PC-9 (cell line): ENCODE measurements at regions of chr3 and their contacts with region 1.

Region 1: GRCh38 chr3:48151058-48151806 is 37.0 kb downstream of the CDC25A start:
- DNase-seq: peak; percentile 52 to 83
- H3K4me3 ChIP-seq: no peak overlapping the region
- H3K27ac ChIP-seq: no peak overlapping the region
- H3K4me1 ChIP-seq: peaks cover 18% of the 10 kb centered on the region
- H3K27me3 ChIP-seq: no peaks in the 10 kb centered on the region
- CTCF ChIP-seq: peak; percentile 83

Region 2: DNA sequence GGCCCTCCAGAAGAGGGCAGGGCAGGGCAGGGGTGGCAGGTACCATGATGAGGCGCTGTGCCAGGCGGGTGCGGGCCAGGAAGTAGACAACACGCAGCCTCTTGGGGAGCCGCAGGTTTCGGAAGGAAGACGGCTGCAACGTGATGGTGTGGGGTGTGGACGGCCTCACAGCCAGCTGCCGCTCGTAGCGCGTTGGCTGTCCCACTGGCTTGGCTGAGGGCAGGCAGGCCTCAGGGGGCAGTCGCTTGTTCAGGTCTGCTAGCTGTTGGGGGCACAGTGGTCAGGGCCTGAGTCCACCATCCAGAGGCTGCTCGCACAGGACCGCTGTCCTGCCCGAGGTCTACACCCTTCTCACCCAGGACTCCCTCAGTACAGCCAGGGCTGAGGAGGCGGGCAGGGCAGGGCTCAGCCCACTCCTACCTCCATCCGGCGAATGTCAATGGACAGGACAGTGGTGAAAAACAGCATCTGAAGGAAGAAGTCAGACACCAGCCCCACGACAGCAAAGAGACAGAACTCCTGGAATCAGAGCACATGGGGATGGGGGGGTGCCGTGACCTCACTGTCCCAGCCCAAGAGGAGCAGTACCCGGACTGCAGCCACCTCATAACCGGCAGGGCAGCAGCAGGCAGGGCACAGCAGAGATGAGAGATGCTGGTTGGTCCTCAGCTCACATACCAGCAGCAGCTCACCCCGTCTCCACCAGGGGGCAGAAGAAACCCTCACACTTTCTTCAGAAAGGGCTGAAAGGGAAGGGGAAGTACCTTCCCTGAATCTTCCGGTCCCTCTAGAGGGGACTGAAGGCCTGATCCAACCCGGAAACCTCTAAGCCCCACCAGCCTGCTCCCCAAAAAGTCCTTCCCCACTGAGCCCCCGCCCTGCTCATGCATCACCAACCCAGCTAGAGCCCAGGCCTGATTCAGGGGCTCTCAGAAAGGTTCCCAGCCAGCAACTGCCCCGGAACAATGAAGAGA is 730.4 kb before region 1 on chr3:
- CTCF ChIA-PET with region 1: no interaction called
- POLR2A ChIA-PET with region 1: no interaction called
- intact Hi-C with region 1: loop called (anchors 10 kb)
- DNase-seq: peak; percentile 74 to 84
- H3K4me3 ChIP-seq: no peak overlapping the region
- H3K27ac ChIP-seq: no peak overlapping the region
- H3K4me1 ChIP-seq: no peaks in the 10 kb centered on the region
- H3K27me3 ChIP-seq: no peaks in the 10 kb centered on the region
- CTCF ChIP-seq: peak; percentile 88

Region 3: DNA sequence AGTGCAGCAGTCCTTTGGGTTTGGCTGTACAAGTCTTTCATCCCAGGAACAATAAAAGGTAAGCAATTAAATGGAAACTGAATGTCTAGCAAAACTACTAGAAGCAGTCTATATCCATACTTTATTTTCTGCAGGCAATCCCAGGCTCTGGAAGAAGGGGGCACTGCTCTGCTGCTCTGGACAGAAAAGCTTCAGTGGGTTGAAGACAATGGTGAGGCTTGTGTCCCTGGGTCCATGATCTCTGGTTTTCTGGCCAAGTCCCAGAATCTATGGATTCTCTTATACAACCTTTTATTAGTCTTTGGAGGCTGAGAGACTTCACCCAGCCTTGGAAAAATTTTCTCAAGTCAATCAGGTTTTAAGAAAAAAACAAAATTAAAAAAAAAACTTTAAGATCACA is 711.1 kb before region 1 on chr3:
- CTCF ChIA-PET with region 1: no interaction called
- POLR2A ChIA-PET with region 1: no interaction called
- intact Hi-C with region 1: no loop called
- DNase-seq: no peak
- H3K4me3 ChIP-seq: no peak overlapping the region
- H3K27ac ChIP-seq: no peak overlapping the region
- H3K4me1 ChIP-seq: no peaks in the 10 kb centered on the region
- H3K27me3 ChIP-seq: no peaks in the 10 kb centered on the region
- CTCF ChIP-seq: no peak

Region 4: DNA sequence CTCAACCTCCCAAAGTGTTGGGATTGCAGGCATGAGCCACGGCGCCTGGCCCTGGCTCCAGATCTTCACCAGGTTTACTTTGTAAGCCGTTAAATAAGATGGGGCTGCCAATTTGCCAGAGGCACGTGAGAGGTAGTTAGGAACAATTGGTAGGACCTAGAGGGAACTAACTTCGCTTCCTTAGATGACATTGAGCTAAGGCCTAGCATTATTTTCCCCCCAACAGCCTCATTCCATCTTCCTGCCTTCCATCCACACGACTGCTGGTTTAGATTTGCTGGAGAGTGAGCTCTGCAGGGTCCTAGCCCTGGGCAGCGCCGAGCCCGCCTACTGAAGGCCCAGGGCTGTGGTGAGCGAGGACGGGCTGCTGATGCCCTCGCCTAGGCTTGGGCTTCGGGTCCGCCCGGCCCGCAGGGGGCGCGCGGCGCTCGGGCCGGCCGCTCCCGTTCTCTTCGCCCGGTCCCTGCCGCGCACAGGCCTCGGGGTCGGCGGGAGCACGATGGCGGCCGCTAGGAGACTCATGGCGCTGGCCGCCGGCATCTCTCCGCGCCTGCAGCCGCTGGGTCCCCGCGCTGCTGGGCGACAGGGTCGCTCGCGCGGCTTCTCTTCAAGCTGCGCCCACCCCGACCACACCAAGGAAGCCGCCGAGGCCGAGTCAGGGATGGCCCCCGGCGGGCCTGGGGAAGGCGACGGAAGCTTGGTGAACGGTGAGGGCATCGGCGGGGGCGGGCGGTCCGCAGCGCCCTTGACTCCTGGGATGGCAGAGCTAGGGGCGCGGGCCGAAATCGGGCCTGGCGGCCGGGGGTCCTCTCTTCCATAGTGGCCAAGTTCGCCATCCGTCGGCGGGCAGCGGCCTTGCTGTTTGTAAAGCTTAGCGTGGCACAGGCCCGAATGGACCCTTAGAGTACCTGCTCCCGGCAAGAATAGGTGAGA is 326.4 kb before region 1 on chr3:
- CTCF ChIA-PET with region 1: interaction called, 11 read pairs
- POLR2A ChIA-PET with region 1: no interaction called
- intact Hi-C with region 1: no loop called
- DNase-seq: peak; percentile 57 to 82
- H3K4me3 ChIP-seq: peak overlapping the region; percentile 93
- H3K27ac ChIP-seq: peak overlapping the region; percentile 41; the same call in 1 of the 2 replicates
- H3K4me1 ChIP-seq: peaks cover 9% of the 10 kb centered on the region
- H3K27me3 ChIP-seq: no peaks in the 10 kb centered on the region
- CTCF ChIP-seq: peak; percentile 70

Region 5: GRCh38 chr3:47932421-47932820 is 218.8 kb before region 1 on chr3:
- CTCF ChIA-PET with region 1: no interaction called
- POLR2A ChIA-PET with region 1: interaction called, 15 read pairs
- intact Hi-C with region 1: no loop called
- DNase-seq: no peak
- H3K4me3 ChIP-seq: no peak overlapping the region
- H3K27ac ChIP-seq: no peak overlapping the region
- H3K4me1 ChIP-seq: no peaks in the 10 kb centered on the region
- H3K27me3 ChIP-seq: no peaks in the 10 kb centered on the region
- CTCF ChIP-seq: no peak

Region 6: DNA sequence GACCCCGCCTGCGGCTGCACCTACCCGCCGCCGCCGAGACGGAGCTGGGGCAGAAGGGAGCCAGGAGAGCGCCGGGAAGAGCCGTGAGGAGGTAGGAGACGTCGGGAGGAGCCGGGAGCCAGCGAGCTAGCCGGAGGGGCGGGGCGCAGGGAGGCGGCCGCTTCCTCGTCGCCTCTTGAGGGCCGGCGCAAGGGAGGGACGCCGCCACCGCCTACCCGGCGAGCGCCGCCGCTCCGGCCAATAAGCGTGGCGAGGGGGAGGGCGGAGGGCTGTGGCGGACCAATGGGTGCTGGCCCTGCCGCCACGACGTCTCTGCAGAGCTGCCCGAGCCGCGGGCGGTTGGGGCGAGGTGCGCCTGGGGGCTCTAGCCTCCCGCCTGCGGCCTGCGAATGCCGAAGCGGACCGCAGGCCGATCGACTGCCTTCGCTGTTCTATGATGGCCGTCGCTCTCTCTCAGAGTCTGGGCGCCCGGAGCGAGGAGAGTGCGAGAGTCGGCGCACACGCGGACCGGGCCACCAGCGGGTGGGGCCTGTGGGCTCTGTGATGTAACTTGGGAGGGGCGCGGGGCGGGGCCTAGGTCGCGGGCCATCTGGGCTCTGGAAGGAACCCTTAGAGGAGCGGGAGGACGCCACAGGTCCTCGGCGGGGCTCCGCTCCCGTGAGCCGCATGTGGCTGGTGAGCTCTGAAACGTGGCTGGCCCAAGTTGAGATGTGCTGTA is 62.3 kb before region 1 on chr3:
- CTCF ChIA-PET with region 1: interaction called, 5 read pairs
- POLR2A ChIA-PET with region 1: no interaction called
- intact Hi-C with region 1: loop called (anchors 5 kb)
- DNase-seq: peak; percentile 88 to 97
- H3K4me3 ChIP-seq: peak overlapping the region; percentile 73
- H3K27ac ChIP-seq: peak overlapping the region; percentile 90
- H3K4me1 ChIP-seq: peaks cover 24% of the 10 kb centered on the region
- H3K27me3 ChIP-seq: no peaks in the 10 kb centered on the region
- CTCF ChIP-seq: 0 out of 2 replicates have a peak, but pooled peaks have one; percentile 3